ENCODE measurements at regions of chr4 and their contacts with region 1.

Region 1: GRCh38 chr4:89307446-89308160 is at the start of gene GPRIN3:
- DNase-seq: peak; percentile 39 to 83 (median 68)
- ATAC-seq: peak; percentile 63
- H3K4me3 ChIP-seq: peak within 1 kb of the TSS; percentile 67 to 88
- H3K4me3 Mint-ChIP-seq: peak within 1 kb of the TSS; percentile 93
- H3K27ac ChIP-seq: peak within 1 kb of the TSS; percentile 59 to 70
- H3K27ac Mint-ChIP-seq: peak within 1 kb of the TSS; percentile 90
- H3K4me1 ChIP-seq: peaks cover 38% of the 10 kb centered on the region
- H3K4me1 Mint-ChIP-seq: peaks cover 54% of the 10 kb centered on the region
- H3K27me3 ChIP-seq: no peaks in the 10 kb centered on the region
- H3K27me3 Mint-ChIP-seq: no peaks in the 10 kb centered on the region
- CTCF ChIP-seq: no peak
- total RNA-seq, gene GPRIN3: 32.1 to 34.4 TPM

Region 2: DNA sequence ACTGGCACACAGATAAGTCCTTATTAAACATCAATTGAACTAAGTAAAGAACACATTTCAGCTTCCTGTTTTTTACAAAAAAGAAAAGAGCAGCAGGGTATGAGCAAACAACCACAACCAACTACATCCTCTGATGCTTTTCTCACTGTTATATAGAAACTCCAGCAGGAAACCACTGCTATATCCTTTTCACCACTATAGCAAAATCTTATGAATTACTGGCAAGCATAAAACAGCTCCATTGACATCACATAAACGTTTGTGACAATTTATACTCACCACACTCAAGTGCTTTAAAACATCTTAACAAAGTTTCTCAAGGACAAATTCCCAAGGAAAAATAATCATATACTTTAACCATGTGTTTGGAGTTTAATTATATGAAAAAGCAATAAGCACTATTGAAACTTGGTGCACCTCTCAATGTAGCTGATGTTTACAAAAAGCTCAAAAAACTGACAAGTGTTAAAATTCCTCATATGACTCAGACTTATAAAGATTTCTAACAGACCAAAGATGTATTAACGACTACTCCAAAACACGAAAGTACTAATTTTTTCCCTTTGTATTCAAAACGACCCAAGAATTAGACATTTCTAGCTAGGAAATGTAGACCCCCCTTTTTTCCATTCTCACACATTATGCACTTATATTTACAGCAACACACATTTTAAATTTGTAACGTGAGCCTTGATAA is 12.9 kb before region 1 on chr4:
- CTCF ChIA-PET with region 1: interaction called, 14 read pairs
- POLR2A ChIA-PET with region 1: interaction called, 19 read pairs
- intact Hi-C with region 1: loop called in 1 of 2 experiments (anchors 1 kb)
- DNase-seq: peak in 2 of 9 experiments; percentile 78 to 88
- ATAC-seq: peak; percentile 74
- H3K4me3 ChIP-seq: peak overlapping the region in 1 of 2 experiments; percentile 21
- H3K4me3 Mint-ChIP-seq: peak overlapping the region; percentile 60
- H3K27ac ChIP-seq: peak overlapping the region; percentile 42 to 82
- H3K27ac Mint-ChIP-seq: peak overlapping the region; percentile 89
- H3K4me1 ChIP-seq: peaks cover 80% of the 10 kb centered on the region
- H3K4me1 Mint-ChIP-seq: peaks cover 89% of the 10 kb centered on the region
- H3K27me3 ChIP-seq: no peaks in the 10 kb centered on the region
- H3K27me3 Mint-ChIP-seq: no peaks in the 10 kb centered on the region
- CTCF ChIP-seq: no peak

Region 3: GRCh38 chr4:89324671-89325070 is 17.1 kb after region 1 on chr4:
- CTCF ChIA-PET with region 1: no interaction called
- POLR2A ChIA-PET with region 1: no interaction called
- intact Hi-C with region 1: loop called in 1 of 2 experiments (anchors 2 kb)
- DNase-seq: peak in 1 of 9 experiments; percentile 37
- ATAC-seq: no peak
- H3K4me3 ChIP-seq: no peak overlapping the region
- H3K4me3 Mint-ChIP-seq: no peak overlapping the region
- H3K27ac ChIP-seq: no peak overlapping the region
- H3K27ac Mint-ChIP-seq: no peak overlapping the region
- H3K4me1 ChIP-seq: no peaks in the 10 kb centered on the region
- H3K4me1 Mint-ChIP-seq: no peaks in the 10 kb centered on the region
- H3K27me3 ChIP-seq: no peaks in the 10 kb centered on the region
- H3K27me3 Mint-ChIP-seq: no peaks in the 10 kb centered on the region
- CTCF ChIP-seq: no peak

Region 4: GRCh38 chr4:89434364-89434988 is 126.9 kb after region 1 on chr4:
- CTCF ChIA-PET with region 1: interaction called, 3 read pairs
- POLR2A ChIA-PET with region 1: no interaction called
- intact Hi-C with region 1: loop called in 1 of 2 experiments (anchors 5 kb)
- DNase-seq: peak in 2 of 9 experiments; percentile 57 to 70
- ATAC-seq: peak; percentile 67
- H3K4me3 ChIP-seq: no peak overlapping the region
- H3K4me3 Mint-ChIP-seq: no peak overlapping the region
- H3K27ac ChIP-seq: no peak overlapping the region
- H3K27ac Mint-ChIP-seq: no peak overlapping the region
- H3K4me1 ChIP-seq: peaks cover 6% of the 10 kb centered on the region
- H3K4me1 Mint-ChIP-seq: peaks cover 7% of the 10 kb centered on the region
- H3K27me3 ChIP-seq: no peaks in the 10 kb centered on the region
- H3K27me3 Mint-ChIP-seq: peaks cover 4% of the 10 kb centered on the region
- CTCF ChIP-seq: peak; percentile 78

Region 5: GRCh38 chr4:89681215-89681614 is 373.6 kb after region 1 on chr4:
- CTCF ChIA-PET with region 1: no interaction called
- POLR2A ChIA-PET with region 1: no interaction called
- intact Hi-C with region 1: no loop called
- DNase-seq: no peak
- ATAC-seq: no peak
- H3K4me3 ChIP-seq: no peak overlapping the region
- H3K4me3 Mint-ChIP-seq: no peak overlapping the region
- H3K27ac ChIP-seq: no peak overlapping the region
- H3K27ac Mint-ChIP-seq: no peak overlapping the region
- H3K4me1 ChIP-seq: no peaks in the 10 kb centered on the region
- H3K4me1 Mint-ChIP-seq: peaks cover 11% of the 10 kb centered on the region
- H3K27me3 ChIP-seq: no peaks in the 10 kb centered on the region
- H3K27me3 Mint-ChIP-seq: peaks cover 6% of the 10 kb centered on the region
- CTCF ChIP-seq: no peak